Activated CD8-positive, alpha-beta T cell treated with anti-CD3 and anti-CD28 coated beads, Interleukin-2, amount 10 ng/mL, durations not matched to agents 7 days and 5 days (primary cell): ENCODE measurements at regions of chr7 and their contacts with region 1.

Region 1: GRCh38 chr7:142459551-142459963 is 201.7 kb upstream of the PRSS58 start:
- DNase-seq: peak; percentile 52
- ATAC-seq: peak; percentile 64
- H3K4me3 Mint-ChIP-seq: no peak overlapping the region
- H3K27ac Mint-ChIP-seq: no peak overlapping the region
- H3K4me1 Mint-ChIP-seq: peaks cover 54% of the 10 kb centered on the region
- H3K27me3 Mint-ChIP-seq: peaks cover 2% of the 10 kb centered on the region

Region 2: DNA sequence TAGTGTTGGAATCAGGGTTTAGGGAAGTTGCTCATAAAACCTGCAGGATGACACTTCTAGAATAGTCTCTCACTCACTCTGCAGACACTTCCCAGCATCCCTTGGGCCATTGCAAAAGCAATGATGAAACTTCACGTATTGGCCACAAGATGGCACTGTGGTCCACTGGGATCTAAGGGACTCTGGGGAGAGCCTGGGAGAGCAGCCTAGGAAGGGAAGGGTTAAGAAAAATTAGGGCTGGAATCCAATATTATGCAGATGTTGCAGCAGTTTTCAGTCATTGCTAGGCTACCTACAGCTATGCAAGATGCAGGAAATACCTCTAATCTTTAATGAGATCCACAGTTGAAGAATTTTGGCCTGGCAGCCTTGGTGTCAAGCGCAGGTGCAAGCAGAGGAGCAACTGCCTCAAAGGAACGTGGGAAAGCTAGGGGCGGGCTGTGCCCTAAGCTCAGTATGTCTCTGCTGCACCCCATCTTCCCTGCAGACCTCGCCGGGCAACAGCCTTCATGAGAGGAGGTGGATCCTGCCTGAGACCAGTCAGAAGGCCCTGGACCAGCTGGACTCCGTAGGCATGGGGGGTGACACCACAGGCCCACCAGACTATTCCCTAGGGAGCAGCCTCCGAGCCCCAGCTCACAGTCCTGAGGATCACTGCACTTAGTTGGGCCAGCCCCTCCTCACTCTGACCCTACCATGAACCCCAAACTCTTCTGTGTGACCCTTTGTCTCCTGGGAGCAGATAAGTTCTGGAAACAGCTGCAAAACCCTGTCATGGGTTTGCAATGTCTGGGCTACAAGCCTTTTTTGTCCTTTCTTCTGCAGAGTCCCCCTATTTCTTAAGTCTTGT is 73.8 kb before region 1 on chr7:
- CTCF ChIA-PET with region 1: interaction called, 33 read pairs
- POLR2A ChIA-PET with region 1: no interaction called
- DNase-seq: peak; percentile 67
- ATAC-seq: peak; percentile 58
- H3K4me3 Mint-ChIP-seq: peak overlapping the region; percentile 22
- H3K27ac Mint-ChIP-seq: peak overlapping the region; percentile 26
- H3K4me1 Mint-ChIP-seq: peaks cover 36% of the 10 kb centered on the region
- H3K27me3 Mint-ChIP-seq: no peaks in the 10 kb centered on the region

Region 3: DNA sequence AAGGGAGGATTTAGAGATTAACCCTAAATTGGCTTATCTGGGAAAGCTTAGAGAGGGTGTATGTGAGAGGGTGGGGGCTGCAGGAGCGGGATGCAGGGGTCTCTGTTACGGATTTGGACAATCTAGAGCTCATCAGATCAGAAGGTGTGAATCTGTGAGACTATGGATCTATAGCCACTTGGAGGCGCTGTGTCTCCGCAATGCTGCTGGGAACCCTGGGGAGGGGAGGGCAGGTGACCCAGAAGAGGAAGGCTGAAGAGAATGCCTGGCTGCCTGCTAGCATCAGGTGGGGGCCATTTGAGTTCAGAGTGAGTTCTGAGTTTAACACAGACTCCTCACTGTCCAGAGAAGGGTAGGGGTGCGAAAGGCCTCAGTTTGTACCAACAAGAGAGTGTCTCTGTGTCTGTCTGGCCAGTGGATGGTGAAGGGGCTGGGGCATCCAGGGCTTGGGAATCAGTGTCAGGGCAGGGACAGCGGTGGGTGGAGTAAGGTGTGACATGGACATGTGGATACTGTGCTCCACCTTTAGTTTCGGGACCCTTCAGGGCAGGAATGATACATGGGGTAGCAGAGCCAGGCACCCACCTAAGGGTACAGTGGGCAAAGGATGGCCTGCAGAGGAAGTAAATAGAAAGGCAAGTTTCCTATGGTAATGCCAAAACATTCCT is 14.4 kb before region 1 on chr7:
- CTCF ChIA-PET with region 1: interaction called, 27 read pairs
- POLR2A ChIA-PET with region 1: no interaction called
- DNase-seq: peak; percentile 56
- ATAC-seq: no peak
- H3K4me3 Mint-ChIP-seq: no peak overlapping the region
- H3K27ac Mint-ChIP-seq: no peak overlapping the region
- H3K4me1 Mint-ChIP-seq: peaks cover 32% of the 10 kb centered on the region
- H3K27me3 Mint-ChIP-seq: peaks cover 9% of the 10 kb centered on the region

Region 4: DNA sequence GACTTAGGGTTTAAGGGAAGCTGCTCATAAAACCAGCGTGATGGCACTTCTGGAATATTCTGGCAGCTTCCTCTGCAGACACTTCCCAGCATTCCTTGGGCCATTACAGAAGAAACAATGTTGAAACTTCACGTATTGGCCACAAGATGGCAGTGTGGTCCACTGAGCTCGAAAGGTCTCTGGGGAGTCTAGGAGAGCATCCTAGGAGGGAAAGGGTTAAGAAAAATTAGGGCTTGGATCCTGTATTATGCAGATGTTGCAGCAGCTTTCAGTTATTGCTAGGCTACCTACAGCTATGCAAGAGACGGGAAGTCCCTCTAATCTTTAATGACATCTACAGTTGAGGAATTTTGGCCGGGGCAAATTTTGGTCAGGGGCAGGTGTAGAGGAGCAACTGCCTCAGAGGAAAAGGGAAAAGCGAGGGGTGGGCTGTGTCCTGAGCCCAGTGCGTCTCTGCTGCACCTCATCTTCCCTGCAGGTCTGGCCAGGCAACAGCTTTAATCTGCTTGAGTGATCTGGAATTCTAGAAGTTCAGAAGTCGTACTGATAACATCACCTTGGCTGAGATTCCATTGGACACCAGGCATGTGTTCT is 19.0 kb after region 1 on chr7:
- CTCF ChIA-PET with region 1: interaction called, 440 read pairs
- POLR2A ChIA-PET with region 1: interaction called, 8 read pairs
- DNase-seq: peak; percentile 53
- ATAC-seq: peak; percentile 32
- H3K4me3 Mint-ChIP-seq: no peak overlapping the region
- H3K27ac Mint-ChIP-seq: no peak overlapping the region
- H3K4me1 Mint-ChIP-seq: peaks cover 56% of the 10 kb centered on the region
- H3K27me3 Mint-ChIP-seq: no peaks in the 10 kb centered on the region

Region 5: DNA sequence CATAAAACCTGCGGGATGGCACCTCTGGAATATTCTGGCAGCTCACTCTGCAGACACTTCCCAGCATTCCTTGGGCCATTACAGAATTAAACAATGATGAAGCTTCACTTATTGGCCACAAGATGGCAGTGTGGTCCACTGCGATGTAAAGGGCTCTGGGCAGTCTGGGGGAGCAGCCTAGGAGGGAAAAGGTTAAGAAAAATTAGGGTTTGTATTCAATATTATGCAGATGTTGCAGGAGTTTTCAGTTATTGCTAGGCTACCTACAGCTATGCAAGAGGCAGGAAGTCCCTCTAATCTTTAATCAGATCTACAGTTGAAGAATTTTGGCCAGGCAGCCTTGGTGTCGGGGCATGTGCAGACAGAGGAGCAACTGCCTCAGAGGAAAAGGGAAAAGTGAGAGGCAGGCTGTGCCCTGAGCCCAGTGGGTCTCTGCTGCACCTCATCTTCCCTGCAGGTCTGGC is 56.5 kb after region 1 on chr7:
- CTCF ChIA-PET with region 1: interaction called, 14 read pairs
- POLR2A ChIA-PET with region 1: no interaction called
- DNase-seq: peak; percentile 56
- ATAC-seq: peak; percentile 79
- H3K4me3 Mint-ChIP-seq: no peak overlapping the region
- H3K27ac Mint-ChIP-seq: no peak overlapping the region
- H3K4me1 Mint-ChIP-seq: peaks cover 31% of the 10 kb centered on the region
- H3K27me3 Mint-ChIP-seq: peaks cover 4% of the 10 kb centered on the region

Region 6: GRCh38 chr7:142535123-142535779 is 75.7 kb after region 1 on chr7:
- CTCF ChIA-PET with region 1: interaction called, 10 read pairs
- POLR2A ChIA-PET with region 1: no interaction called
- DNase-seq: peak; percentile 82
- ATAC-seq: peak; percentile 95
- H3K4me3 Mint-ChIP-seq: peak overlapping the region; percentile 52
- H3K27ac Mint-ChIP-seq: peak overlapping the region; percentile 70
- H3K4me1 Mint-ChIP-seq: peaks cover 29% of the 10 kb centered on the region
- H3K27me3 Mint-ChIP-seq: peaks cover 2% of the 10 kb centered on the region

Region 7: DNA sequence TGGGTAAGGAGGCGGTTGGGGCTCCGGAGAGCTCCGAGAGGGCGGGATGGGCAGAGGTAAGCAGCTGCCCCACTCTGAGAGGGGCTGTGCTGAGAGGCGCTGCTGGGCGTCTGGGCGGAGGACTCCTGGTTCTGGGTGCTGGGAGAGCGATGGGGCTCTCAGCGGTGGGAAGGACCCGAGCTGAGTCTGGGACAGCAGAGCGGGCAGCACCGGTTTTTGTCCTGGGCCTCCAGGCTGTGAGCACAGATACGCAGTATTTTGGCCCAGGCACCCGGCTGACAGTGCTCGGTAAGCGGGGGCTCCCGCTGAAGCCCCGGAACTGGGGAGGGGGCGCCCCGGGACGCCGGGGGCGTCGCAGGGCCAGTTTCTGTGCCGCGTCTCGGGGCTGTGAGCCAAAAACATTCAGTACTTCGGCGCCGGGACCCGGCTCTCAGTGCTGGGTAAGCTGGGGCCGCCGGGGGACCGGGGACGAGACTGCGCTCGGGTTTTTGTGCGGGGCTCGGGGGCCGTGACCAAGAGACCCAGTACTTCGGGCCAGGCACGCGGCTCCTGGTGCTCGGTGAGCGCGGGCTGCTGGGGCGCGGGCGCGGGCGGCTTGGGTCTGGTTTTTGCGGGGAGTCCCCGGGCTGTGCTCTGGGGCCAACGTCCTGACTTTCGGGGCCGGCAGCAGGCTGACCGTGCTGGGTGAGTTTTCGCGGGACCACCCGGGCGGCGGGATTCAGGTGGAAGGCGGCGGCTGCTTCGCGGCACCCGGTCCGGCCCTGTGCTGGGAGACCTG is 337.2 kb after region 1 on chr7:
- CTCF ChIA-PET with region 1: no interaction called
- POLR2A ChIA-PET with region 1: interaction called, 10 read pairs
- DNase-seq: peak; percentile 35
- ATAC-seq: peak; percentile 11
- H3K4me3 Mint-ChIP-seq: peak overlapping the region; percentile 90
- H3K27ac Mint-ChIP-seq: peak overlapping the region; percentile 99
- H3K4me1 Mint-ChIP-seq: peaks cover 70% of the 10 kb centered on the region
- H3K27me3 Mint-ChIP-seq: no peaks in the 10 kb centered on the region